ENCODE measurements at regions of chr10 and their contacts with region 1.

Region 1: DNA sequence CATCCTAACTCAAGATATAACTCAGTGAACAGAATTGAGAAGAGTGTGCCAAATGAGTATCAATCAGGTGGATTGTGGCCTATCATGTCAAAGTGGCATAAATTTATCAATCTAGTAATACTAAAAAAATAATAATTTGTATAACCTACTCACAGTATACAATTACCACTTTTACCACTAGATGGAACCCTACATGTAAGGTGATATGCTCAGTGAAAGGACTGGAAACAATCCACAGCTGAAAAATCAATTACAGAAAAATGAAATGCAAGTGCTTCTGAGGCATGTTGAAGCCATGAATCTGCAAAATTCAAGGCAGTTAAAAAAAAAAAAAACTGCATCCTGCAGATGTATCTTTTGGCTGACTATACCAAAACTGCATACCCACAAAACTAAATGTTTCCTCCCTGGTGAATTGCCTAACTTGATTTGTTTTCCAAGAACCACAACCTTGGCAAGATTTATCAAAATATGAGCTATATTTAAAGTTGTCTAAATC is 13.9 kb downstream of the ARHGAP19 start:
- DNase-seq: peak; percentile 79
- H3K4me3 ChIP-seq: no peak overlapping the region
- H3K27ac ChIP-seq: no peak overlapping the region
- H3K27me3 ChIP-seq: no peaks in the 10 kb centered on the region
- CTCF ChIP-seq: peak; percentile 60

Region 2: DNA sequence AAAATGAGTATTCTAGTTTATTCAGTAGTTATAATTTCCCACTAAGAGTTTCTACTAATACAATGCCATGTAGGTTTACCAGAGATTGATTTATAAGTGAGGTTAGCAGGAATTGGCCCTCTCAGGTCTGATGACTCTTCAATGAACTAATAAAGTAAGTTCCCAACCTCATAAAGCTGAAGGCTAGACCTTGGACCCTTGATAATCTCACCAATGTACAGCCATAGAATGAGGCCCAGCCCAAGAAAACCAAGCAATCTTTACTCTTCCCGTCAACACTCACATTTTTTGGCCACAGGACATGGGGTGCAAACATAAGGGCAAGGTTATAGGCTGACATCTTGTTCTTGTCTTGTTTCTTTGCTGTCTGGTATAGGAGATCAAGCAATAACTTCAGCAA is 19.4 kb before region 1 on chr10:
- CTCF ChIA-PET with region 1: interaction called, 20 read pairs
- POLR2A ChIA-PET with region 1: no interaction called
- DNase-seq: no peak
- H3K4me3 ChIP-seq: no peak overlapping the region
- H3K27ac ChIP-seq: no peak overlapping the region
- H3K27me3 ChIP-seq: no peaks in the 10 kb centered on the region
- CTCF ChIP-seq: no peak

Region 3: GRCh38 chr10:97292097-97292862 is 13.7 kb after region 1 on chr10 and contains the start of gene ARHGAP19:
- CTCF ChIA-PET with region 1: interaction called, 39 read pairs
- POLR2A ChIA-PET with region 1: interaction called, 9 read pairs
- DNase-seq: peak; percentile 95
- H3K4me3 ChIP-seq: peak within 1 kb of the TSS; percentile 83
- H3K27ac ChIP-seq: peak within 1 kb of the TSS; percentile 95
- H3K27me3 ChIP-seq: no peaks in the 10 kb centered on the region
- CTCF ChIP-seq: peak; percentile 18; the same call in 1 of the 2 replicates
- polyA plus RNA-seq, gene ARHGAP19: 7.8 and 8.6 TPM in 2 replicates

Region 4: DNA sequence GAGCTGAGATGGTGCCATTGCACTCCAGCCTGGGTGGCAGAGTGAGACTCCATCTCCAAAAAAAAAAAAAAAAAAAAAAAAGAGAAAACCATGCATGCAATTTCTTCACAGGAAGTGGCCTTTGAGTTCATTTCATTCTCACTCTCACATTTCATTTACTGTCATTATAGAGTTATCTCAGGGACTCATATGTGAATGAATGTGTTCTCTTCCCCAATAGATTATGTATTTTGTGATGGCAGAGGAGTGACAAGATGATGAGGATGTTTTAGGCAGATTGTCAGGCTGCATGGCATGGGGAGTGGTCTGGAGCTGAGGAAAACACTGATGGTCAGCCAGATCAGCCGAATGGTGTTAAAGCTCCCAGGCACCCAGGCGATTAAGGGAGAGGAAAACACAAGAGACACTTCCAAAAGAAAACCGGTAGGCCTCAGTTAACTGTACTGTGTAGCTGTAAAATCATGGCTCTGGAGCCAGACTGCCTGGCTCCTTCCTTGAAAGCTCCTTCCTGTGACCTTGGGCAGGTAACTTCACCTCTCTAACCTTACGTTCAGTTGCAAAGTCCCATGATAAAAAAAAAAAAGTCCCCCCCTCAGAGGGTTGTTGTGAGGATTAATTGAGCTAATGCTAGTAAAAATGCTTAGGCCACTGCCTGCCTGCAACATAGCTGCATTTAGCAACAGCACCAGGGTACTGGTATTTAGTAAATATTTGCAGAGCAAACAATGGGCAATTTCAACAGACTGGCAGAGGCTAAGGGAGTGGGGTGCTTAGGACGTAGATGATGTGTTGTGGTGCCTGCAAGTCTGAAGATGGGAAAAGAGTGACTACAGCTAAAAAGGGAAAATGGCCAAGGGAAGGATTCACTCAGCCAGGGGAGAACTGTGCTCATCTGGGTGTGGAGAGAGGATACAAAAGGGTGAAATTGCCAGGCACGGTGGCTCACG is 49.1 kb after region 1 on chr10:
- CTCF ChIA-PET with region 1: interaction called, 35 read pairs
- POLR2A ChIA-PET with region 1: interaction called, 8 read pairs
- DNase-seq: no peak
- H3K4me3 ChIP-seq: no peak overlapping the region
- H3K27ac ChIP-seq: no peak overlapping the region
- H3K27me3 ChIP-seq: no peaks in the 10 kb centered on the region
- CTCF ChIP-seq: no peak

Region 5: GRCh38 chr10:97334370-97335175 is 56.0 kb after region 1 on chr10 and contains the start of gene FRAT2:
- CTCF ChIA-PET with region 1: interaction called, 35 read pairs
- POLR2A ChIA-PET with region 1: interaction called, 8 read pairs
- DNase-seq: peak; percentile 74
- H3K4me3 ChIP-seq: peak within 1 kb of the TSS; percentile 75
- H3K27ac ChIP-seq: peak within 1 kb of the TSS; percentile 91
- H3K27me3 ChIP-seq: peaks cover 32% of the 10 kb centered on the region
- CTCF ChIP-seq: no peak
- polyA plus RNA-seq, gene FRAT2: 2.4 and 2.6 TPM in 2 replicates

Region 6: DNA sequence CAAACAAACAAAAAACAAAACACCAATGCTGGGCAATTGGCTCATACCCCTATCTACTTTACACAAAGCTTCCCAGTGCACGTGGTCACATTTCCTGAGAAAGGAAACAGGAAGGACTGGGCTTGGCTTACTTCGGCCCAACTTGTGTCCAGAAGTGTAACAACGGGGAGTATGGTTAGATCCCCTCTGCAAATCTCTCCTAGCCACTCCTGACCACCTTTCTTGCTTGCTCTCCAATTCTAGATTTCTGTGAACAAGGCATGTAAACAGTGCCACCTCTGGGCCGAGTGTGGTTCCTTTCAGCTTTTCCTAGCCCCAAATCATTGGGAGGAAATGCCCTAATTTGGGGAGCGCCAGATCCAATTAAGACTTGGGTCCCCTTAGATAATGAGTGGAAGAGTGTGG is 77.0 kb after region 1 on chr10:
- CTCF ChIA-PET with region 1: interaction called, 23 read pairs
- POLR2A ChIA-PET with region 1: no interaction called
- DNase-seq: no peak
- H3K4me3 ChIP-seq: no peak overlapping the region
- H3K27ac ChIP-seq: no peak overlapping the region
- H3K27me3 ChIP-seq: no peaks in the 10 kb centered on the region
- CTCF ChIP-seq: peak; percentile 50